ENCODE measurements at regions of chr4 and their contacts with region 1.

Region 1: GRCh38 chr4:140153718-140154571 is at the start of gene MAML3:
- DNase-seq: peak; percentile 67
- ATAC-seq: peak; percentile 30
- H3K4me3 Mint-ChIP-seq: peak within 1 kb of the TSS; percentile 88
- H3K27ac Mint-ChIP-seq: peak within 1 kb of the TSS; percentile 81
- H3K4me1 Mint-ChIP-seq: peaks cover 52% of the 10 kb centered on the region
- H3K27me3 Mint-ChIP-seq: peaks cover 29% of the 10 kb centered on the region
- CTCF ChIP-seq: no peak
- total RNA-seq, gene MAML3: 1.9 and 2.6 TPM in 2 replicates

Region 2: DNA sequence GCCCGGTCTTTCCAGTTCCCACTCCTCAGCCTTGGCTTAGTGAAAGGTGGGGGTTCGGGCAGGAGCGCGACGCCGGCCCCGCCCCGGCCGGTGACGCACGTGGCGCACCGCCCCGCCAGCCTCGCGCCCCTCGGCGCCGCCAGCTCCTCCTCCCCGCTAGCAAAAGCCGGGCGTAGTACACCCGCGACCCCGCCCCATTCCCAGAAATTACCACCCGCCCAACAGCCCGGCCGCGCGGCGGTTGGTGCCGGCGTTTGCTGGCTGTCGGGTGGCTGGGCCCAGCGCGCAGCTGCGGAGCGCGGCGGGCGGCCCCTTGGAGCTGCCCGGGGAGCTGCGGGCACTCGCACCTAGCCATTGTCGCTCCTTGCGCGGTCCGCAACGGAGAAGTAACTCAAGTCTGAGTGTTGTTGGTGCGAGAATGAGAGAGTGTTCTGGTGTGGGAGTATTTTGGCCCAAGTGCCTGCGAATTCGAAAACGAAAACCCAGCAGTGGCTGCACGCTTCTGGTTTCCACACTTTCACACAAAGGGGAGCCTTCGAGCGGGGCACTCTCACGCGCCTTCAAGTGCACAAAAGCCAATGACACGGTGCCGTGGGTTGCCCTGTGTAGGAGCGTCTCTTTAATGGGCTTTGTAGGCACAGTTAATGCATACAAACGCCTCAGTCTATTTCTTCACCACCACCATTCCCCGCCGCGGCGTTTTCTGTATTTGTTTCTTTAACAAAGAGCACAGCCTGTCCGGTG is 975.9 kb before region 1 on chr4:
- CTCF ChIA-PET with region 1: no interaction called
- POLR2A ChIA-PET with region 1: no interaction called
- intact Hi-C with region 1: loop called (anchors 2 kb)
- DNase-seq: peak; percentile 89
- ATAC-seq: peak; percentile 74
- H3K4me3 Mint-ChIP-seq: peak overlapping the region; percentile 93
- H3K27ac Mint-ChIP-seq: peak overlapping the region; percentile 92
- H3K4me1 Mint-ChIP-seq: peaks cover 25% of the 10 kb centered on the region
- H3K27me3 Mint-ChIP-seq: no peaks in the 10 kb centered on the region
- CTCF ChIP-seq: no peak

Region 3: GRCh38 chr4:139665690-139666529 is 488.0 kb before region 1 on chr4 and contains the start of gene MGST2:
- CTCF ChIA-PET with region 1: no interaction called
- POLR2A ChIA-PET with region 1: interaction called, 3 read pairs
- intact Hi-C with region 1: loop called (anchors 10 kb)
- DNase-seq: peak; percentile 26
- ATAC-seq: peak; percentile 70
- H3K4me3 Mint-ChIP-seq: peak within 1 kb of the TSS; percentile 85
- H3K27ac Mint-ChIP-seq: peak within 1 kb of the TSS; percentile 51
- H3K4me1 Mint-ChIP-seq: peaks cover 16% of the 10 kb centered on the region
- H3K27me3 Mint-ChIP-seq: no peaks in the 10 kb centered on the region
- CTCF ChIP-seq: no peak
- total RNA-seq, gene MGST2: 0.71 and 1.2 TPM in 2 replicates

Region 4: GRCh38 chr4:140049024-140049848 is 104.7 kb before region 1 on chr4:
- CTCF ChIA-PET with region 1: interaction called, 5 read pairs
- POLR2A ChIA-PET with region 1: interaction called, 15 read pairs
- intact Hi-C with region 1: loop called (anchors 1 kb)
- DNase-seq: no peak
- ATAC-seq: peak; percentile 81
- H3K4me3 Mint-ChIP-seq: peak overlapping the region; percentile 74
- H3K27ac Mint-ChIP-seq: peak overlapping the region; percentile 33
- H3K4me1 Mint-ChIP-seq: peaks cover 33% of the 10 kb centered on the region
- H3K27me3 Mint-ChIP-seq: peaks cover 14% of the 10 kb centered on the region
- CTCF ChIP-seq: no peak

Region 5: GRCh38 chr4:140237606-140237986 is 83.7 kb after region 1 on chr4:
- CTCF ChIA-PET with region 1: no interaction called
- POLR2A ChIA-PET with region 1: interaction called, 13 read pairs
- intact Hi-C with region 1: loop called (anchors 2 kb)
- DNase-seq: no peak
- ATAC-seq: no peak
- H3K4me3 Mint-ChIP-seq: no peak overlapping the region
- H3K27ac Mint-ChIP-seq: no peak overlapping the region
- H3K4me1 Mint-ChIP-seq: peaks cover 62% of the 10 kb centered on the region
- H3K27me3 Mint-ChIP-seq: peaks cover 20% of the 10 kb centered on the region
- CTCF ChIP-seq: no peak

Region 6: DNA sequence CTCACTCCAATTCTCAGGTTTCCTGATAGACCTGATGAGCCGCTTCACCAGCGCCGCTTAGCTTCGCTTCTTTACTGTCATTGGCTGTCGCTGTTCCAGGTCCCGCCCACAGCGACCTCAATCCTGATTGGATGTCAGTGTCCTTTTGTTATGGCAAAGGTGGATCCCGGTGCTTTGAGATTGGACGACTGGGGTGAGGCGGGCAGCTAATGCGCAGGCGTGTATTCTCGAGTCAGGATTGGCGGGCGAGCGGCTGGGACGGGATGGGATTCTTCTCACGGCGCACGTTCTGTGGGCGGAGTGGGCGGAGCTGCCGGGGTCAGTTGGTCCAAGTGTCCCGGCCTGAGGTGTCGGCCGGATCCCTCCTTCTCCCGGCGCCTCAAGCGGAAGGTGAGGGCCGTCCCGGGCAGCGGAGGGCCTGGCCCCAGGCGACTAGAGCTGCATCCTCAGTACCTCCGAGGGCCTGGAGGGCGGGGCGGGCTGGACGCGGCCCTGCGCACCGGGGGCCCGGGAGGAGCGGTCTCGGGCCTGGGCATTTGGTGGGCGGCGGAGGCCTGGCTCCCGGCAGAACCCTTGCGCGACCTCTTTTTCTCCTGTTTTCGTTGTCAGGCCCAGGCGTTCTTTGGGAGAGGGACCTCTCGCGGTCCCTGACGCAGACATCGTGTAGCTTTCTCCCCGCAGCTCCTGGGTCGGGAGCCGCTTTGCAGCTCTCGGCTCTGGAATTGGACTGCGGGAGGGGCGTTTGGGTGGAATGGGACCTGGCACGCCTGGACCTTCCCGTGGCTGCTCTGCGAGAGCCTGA is 219.6 kb after region 1 on chr4 and contains the start of gene SCOC:
- CTCF ChIA-PET with region 1: no interaction called
- POLR2A ChIA-PET with region 1: no interaction called
- intact Hi-C with region 1: loop called (anchors 2 kb)
- DNase-seq: peak; percentile 85
- ATAC-seq: peak; percentile 95
- H3K4me3 Mint-ChIP-seq: no peak within 1 kb of the TSS
- H3K27ac Mint-ChIP-seq: peak within 1 kb of the TSS; percentile 74
- H3K4me1 Mint-ChIP-seq: peaks cover 22% of the 10 kb centered on the region
- H3K27me3 Mint-ChIP-seq: no peaks in the 10 kb centered on the region
- CTCF ChIP-seq: no peak
- total RNA-seq, gene SCOC: 18.0 and 19.9 TPM in 2 replicates

Region 7: DNA sequence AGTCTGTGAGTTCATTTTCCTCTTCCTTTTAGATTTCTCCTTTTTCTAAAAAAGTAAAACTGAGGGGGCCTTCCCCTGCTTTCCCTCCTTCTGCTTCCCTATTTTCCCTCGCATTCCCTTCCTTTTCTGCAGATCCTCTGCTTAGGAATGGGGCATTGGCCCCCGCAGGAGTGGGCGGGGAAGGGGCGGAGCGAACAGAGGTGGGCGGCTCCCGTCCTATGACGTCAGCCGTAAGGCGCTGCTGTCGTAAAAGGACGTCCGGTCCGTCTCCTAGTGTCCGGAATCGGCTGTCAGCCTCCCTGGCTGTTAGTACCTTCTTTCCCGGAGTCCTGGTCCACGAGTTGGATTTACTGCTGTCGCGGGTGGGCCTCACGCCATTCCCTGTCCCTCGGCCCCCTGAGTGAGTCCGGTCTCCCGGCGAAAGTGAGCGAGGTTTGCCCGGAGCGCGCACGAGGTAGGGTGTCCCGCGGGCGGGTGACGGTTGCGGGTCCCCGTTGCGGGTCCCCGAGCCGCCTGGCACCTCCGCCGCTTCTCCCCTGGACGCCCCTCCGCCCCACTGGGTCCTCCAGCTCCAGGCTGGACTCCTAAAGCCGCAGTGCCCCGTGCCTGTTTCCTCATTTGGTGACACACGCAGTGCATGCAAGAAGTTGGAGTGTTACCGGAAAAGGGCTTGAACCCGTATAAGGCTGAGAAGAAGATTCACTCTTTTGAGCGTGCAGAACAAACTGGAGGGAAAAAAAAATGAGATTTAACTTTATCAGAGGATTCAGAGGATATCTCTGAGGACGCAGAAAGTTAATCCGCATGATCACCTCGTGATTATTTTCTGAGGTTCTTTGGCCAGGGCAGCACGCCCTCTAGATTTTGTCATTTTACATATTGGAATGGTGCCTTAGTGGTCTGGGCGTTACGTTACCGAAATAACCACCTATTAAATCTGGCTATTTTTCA is 1067.0 kb after region 1 on chr4 and contains the start of gene ZNF330:
- CTCF ChIA-PET with region 1: no interaction called
- POLR2A ChIA-PET with region 1: no interaction called
- intact Hi-C with region 1: loop called (anchors 5 kb)
- DNase-seq: peak; percentile 95
- ATAC-seq: peak; percentile 90
- H3K4me3 Mint-ChIP-seq: peak within 1 kb of the TSS; percentile 94
- H3K27ac Mint-ChIP-seq: peak within 1 kb of the TSS; percentile 89
- H3K4me1 Mint-ChIP-seq: peaks cover 28% of the 10 kb centered on the region
- H3K27me3 Mint-ChIP-seq: no peaks in the 10 kb centered on the region
- CTCF ChIP-seq: no peak
- total RNA-seq, gene ZNF330: 40.7 and 41.2 TPM in 2 replicates

Region 8: DNA sequence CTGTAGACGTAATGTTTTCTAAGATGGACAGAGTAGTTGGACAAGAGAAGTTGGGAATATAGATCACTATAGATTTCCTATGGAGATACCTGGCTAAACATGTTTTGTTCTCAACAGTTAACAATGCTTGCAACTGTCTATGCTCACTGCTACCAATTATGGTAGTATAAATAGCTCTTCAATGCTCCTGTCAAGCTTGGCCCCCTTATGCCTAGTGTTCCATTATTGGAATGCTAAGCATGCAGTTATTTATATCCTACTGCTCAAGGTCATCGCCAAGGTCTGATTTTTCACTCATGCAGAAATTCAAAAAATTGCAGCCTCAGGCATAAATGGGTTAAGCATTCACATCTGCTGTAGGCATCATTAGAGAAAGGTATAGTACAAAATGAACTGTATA is 2001.4 kb after region 1 on chr4:
- CTCF ChIA-PET with region 1: no interaction called
- POLR2A ChIA-PET with region 1: no interaction called
- intact Hi-C with region 1: no loop called
- DNase-seq: no peak
- ATAC-seq: no peak
- H3K4me3 Mint-ChIP-seq: no peak overlapping the region
- H3K27ac Mint-ChIP-seq: no peak overlapping the region
- H3K4me1 Mint-ChIP-seq: no peaks in the 10 kb centered on the region
- H3K27me3 Mint-ChIP-seq: no peaks in the 10 kb centered on the region
- CTCF ChIP-seq: no peak

Measured in activated B cell treated with CpG ODN at 0.5 μM for 24 hours (primary cell).